ENCODE measurements at regions of chr21 and their contacts with region 1.

Region 1: DNA sequence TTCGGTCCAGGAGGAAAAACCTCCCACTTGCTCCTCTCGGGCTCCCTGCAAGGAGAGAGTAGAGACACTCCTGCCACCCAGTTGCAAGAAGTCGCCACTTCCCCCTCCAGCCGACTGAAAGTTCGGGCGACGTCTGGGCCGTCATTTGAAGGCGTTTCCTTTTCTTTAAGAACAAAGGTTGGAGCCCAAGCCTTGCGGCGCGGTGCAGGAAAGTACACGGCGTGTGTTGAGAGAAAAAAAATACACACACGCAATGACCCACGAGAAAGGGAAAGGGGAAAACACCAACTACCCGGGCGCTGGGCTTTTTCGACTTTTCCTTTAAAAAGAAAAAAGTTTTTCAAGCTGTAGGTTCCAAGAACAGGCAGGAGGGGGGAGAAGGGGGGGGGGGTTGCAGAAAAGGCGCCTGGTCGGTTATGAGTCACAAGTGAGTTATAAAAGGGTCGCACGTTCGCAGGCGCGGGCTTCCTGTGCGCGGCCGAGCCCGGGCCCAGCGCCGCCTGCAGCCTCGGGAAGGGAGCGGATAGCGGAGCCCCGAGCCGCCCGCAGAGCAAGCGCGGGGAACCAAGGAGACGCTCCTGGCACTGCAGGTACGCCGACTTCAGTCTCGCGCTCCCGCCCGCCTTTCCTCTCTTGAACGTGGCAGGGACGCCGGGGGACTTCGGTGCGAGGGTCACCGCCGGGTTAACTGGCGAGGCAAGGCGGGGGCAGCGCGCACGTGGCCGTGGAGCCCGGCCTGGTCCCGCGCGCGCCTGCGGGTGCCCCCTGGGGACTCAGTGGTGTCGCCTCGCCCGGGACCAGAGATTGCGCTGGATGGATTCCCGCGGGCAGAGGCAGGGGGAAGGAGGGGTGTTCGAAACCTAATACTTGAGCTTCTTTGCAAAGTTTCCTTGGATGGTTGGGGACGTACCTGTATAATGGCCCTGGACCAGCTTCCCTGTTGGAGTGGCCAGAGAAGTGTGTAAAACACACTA is 45.3 kb downstream of the MRPL39 start:
- DNase-seq: peak; percentile 12 to 93 (median 43)
- ATAC-seq: peak; percentile 74
- H3K4me3 ChIP-seq: peak overlapping the region; percentile 34
- H3K4me3 Mint-ChIP-seq: peak overlapping the region; percentile 88 to 98 (median 94)
- H3K27ac ChIP-seq: peak overlapping the region; percentile 61
- H3K27ac Mint-ChIP-seq: peak overlapping the region; percentile 69 to 96 (median 92)
- H3K4me1 ChIP-seq: peaks cover 11 to 29% of the 10 kb centered on the region in 2 donors
- H3K4me1 Mint-ChIP-seq: peaks cover 27 to 68% (median 50%) of the 10 kb centered on the region in 7 donors
- H3K27me3 ChIP-seq: no peaks in the 10 kb centered on the region
- H3K27me3 Mint-ChIP-seq: no peaks in the 10 kb centered on the region

Region 2: GRCh38 chr21:25385911-25386474 is 176.0 kb before region 1 on chr21:
- CTCF ChIA-PET with region 1: no interaction called
- POLR2A ChIA-PET with region 1: no interaction called
- intact Hi-C with region 1: loop called in 1 of 2 experiments (anchors 5 kb)
- DNase-seq: peak in 5 of 9 donors; percentile 14 to 35 (median 25)
- ATAC-seq: peak; percentile 57
- H3K4me3 ChIP-seq: no peak overlapping the region
- H3K4me3 Mint-ChIP-seq: no peak overlapping the region
- H3K27ac ChIP-seq: no peak overlapping the region
- H3K27ac Mint-ChIP-seq: peak overlapping the region in 1 of 9 donors; percentile 53
- H3K4me1 ChIP-seq: no peaks in the 10 kb centered on the region
- H3K4me1 Mint-ChIP-seq: peaks cover 0 to 9% (median 6%) of the 10 kb centered on the region in 7 donors
- H3K27me3 ChIP-seq: no peaks in the 10 kb centered on the region
- H3K27me3 Mint-ChIP-seq: peaks cover 0 to 13% (median 11%) of the 10 kb centered on the region in 5 donors

Region 3: DNA sequence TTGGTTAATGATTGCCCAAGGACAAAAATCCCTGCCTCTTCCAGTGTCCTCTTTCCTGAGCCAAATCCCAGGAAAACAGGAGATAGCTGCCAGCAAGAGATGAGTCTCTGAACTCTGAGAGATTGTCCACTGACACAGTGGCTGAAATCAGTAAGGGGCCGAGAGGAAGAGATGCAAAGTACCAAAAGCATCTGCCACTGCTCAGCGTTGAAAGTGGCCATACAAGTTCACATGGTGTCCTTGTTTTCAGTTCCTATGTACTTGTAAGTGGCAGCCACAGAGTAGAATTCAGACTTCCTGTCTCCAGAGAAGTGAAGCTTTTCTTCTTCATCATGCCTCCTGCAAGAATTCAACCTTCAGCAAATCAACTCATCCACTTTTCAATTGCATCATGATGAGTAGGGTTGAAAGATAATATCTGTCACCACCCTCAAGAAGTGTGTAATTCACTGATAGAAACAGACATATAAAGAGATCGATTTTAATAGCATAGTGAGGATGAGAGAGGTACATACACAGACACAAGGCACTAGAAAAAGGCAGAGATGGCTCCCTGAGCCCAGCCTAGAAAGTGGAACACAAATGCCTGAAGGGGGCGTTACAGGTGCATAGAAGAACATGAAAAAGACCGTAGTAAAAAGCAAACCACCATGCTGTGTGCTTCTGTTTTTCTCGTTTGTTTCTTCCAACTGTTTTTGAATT is 140.5 kb before region 1 on chr21:
- CTCF ChIA-PET with region 1: no interaction called
- POLR2A ChIA-PET with region 1: no interaction called
- intact Hi-C with region 1: loop called (anchors 1 kb)
- DNase-seq: peak in 8 of 9 donors; percentile 18 to 50 (median 40)
- ATAC-seq: peak; percentile 91
- H3K4me3 ChIP-seq: no peak overlapping the region
- H3K4me3 Mint-ChIP-seq: peak overlapping the region in 6 of 10 donors; percentile 7 to 88 (median 56)
- H3K27ac ChIP-seq: no peak overlapping the region
- H3K27ac Mint-ChIP-seq: peak overlapping the region in 7 of 9 donors; percentile 1 to 84 (median 41)
- H3K4me1 ChIP-seq: peaks cover 6 to 7% of the 10 kb centered on the region in 2 donors
- H3K4me1 Mint-ChIP-seq: peaks cover 4 to 25% (median 12%) of the 10 kb centered on the region in 7 donors
- H3K27me3 ChIP-seq: no peaks in the 10 kb centered on the region
- H3K27me3 Mint-ChIP-seq: peaks cover 0 to 6% (median 0%) of the 10 kb centered on the region in 5 donors

Region 4: DNA sequence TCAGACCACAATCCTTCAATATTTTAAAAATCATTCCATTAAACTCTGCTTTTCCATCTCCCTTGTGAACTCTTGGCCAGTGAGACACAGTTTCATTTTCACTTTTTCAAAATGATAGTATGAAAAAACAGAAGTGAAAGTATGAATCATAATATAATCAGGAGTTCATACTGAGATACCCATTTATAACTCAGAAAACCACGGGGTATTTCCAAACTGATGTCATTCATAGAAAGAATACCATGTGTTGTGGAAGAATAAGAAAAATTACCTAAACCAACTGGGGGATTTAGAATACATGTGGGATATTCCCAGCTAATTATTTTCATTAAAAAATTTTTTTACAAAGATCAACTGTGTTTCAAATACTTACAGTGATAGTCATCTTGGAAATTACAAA is 104.5 kb before region 1 on chr21:
- CTCF ChIA-PET with region 1: no interaction called
- POLR2A ChIA-PET with region 1: no interaction called
- intact Hi-C with region 1: loop called (anchors 1 to 5 kb)
- DNase-seq: peak in 6 of 9 donors; percentile 11 to 49 (median 34)
- ATAC-seq: peak; percentile 95
- H3K4me3 ChIP-seq: peak overlapping the region; percentile 1
- H3K4me3 Mint-ChIP-seq: peak overlapping the region; percentile 65 to 91 (median 82)
- H3K27ac ChIP-seq: peak overlapping the region; percentile 40
- H3K27ac Mint-ChIP-seq: peak overlapping the region; percentile 81 to 91 (median 86)
- H3K4me1 ChIP-seq: peaks cover 0 to 5% of the 10 kb centered on the region in 2 donors
- H3K4me1 Mint-ChIP-seq: peaks cover 5 to 39% (median 24%) of the 10 kb centered on the region in 7 donors
- H3K27me3 ChIP-seq: no peaks in the 10 kb centered on the region
- H3K27me3 Mint-ChIP-seq: no peaks in the 10 kb centered on the region

Region 5: DNA sequence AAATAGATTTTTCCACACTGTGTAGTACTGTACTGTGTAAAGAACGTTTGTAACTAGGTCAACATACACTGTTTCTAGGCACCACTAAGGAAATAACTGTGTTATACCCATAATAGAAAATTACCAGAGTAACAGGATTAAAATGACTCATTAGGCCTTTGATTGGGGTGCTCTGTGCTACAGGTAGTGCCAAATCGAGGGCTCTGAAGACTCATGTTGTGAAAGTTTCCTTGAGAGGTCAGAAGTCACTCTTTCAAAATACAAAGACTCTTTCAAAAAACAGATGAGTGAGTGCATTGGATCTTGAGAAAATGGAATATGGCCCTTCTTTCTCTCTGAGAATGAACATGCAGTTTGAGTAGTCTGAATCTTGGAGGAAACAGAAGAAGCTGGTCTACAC is 97.7 kb before region 1 on chr21:
- CTCF ChIA-PET with region 1: no interaction called
- POLR2A ChIA-PET with region 1: no interaction called
- intact Hi-C with region 1: loop called in 1 of 2 experiments (anchors 5 kb)
- DNase-seq: no peak
- ATAC-seq: peak; percentile 75
- H3K4me3 ChIP-seq: no peak overlapping the region
- H3K4me3 Mint-ChIP-seq: peak overlapping the region in 1 of 10 donors; percentile 8
- H3K27ac ChIP-seq: no peak overlapping the region
- H3K27ac Mint-ChIP-seq: peak overlapping the region in 2 of 9 donors; percentile 13 to 83
- H3K4me1 ChIP-seq: no peaks in the 10 kb centered on the region
- H3K4me1 Mint-ChIP-seq: peaks cover 0 to 47% (median 8%) of the 10 kb centered on the region in 7 donors
- H3K27me3 ChIP-seq: no peaks in the 10 kb centered on the region
- H3K27me3 Mint-ChIP-seq: no peaks in the 10 kb centered on the region

Region 6: GRCh38 chr21:25507522-25507921 is 54.4 kb before region 1 on chr21:
- CTCF ChIA-PET with region 1: interaction called, 3 read pairs
- POLR2A ChIA-PET with region 1: no interaction called
- intact Hi-C with region 1: loop called in 1 of 2 experiments (anchors 5 kb)
- DNase-seq: no peak
- ATAC-seq: no peak
- H3K4me3 ChIP-seq: no peak overlapping the region
- H3K4me3 Mint-ChIP-seq: no peak overlapping the region
- H3K27ac ChIP-seq: no peak overlapping the region
- H3K27ac Mint-ChIP-seq: no peak overlapping the region
- H3K4me1 ChIP-seq: no peaks in the 10 kb centered on the region
- H3K4me1 Mint-ChIP-seq: peaks cover 0 to 31% (median 0%) of the 10 kb centered on the region in 7 donors
- H3K27me3 ChIP-seq: no peaks in the 10 kb centered on the region
- H3K27me3 Mint-ChIP-seq: no peaks in the 10 kb centered on the region

Region 7: DNA sequence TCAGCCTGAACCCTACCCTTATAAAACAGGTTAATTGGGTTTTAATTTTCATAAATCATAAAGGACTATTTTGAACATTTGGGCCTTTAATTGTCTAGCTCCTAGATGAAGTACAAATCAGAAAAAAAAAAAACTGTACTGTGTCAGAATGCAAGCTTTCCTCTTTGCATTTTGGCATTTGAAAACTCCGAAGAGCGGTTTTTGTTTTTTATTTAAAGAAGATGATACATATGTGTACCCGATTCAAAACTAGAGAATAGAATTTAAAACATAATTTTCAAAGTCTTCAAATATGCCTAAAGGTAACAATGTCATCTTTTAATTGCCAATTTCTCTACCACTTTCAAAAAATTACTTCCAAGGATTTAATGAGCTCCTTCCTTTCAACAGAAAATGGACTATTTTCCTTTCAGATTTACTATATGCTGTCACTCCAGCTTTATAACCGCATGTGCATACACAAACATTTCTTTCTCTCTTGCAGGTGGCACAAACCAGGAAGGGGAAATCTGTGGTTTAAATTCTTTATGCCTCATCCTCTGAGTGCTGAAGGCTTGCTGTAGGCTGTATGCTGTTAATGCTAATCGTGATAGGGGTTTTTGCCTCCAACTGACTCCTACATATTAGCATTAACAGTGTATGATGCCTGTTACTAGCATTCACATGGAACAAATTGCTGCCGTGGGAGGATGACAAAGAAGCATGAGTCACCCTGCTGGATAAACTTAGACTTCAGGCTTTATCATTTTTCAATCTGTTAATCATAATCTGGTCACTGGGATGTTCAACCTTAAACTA is 11.7 kb after region 1 on chr21:
- CTCF ChIA-PET with region 1: interaction called, 4 read pairs
- POLR2A ChIA-PET with region 1: interaction called, 6 read pairs
- intact Hi-C with region 1: loop called (anchors 1 kb)
- DNase-seq: peak in 8 of 9 donors; percentile 42 to 63 (median 52)
- ATAC-seq: peak; percentile 81
- H3K4me3 ChIP-seq: peak overlapping the region; percentile 33
- H3K4me3 Mint-ChIP-seq: peak overlapping the region; percentile 72 to 92 (median 80)
- H3K27ac ChIP-seq: peak overlapping the region; percentile 42
- H3K27ac Mint-ChIP-seq: peak overlapping the region; percentile 80 to 94 (median 90)
- H3K4me1 ChIP-seq: peaks cover 4 to 15% of the 10 kb centered on the region in 2 donors
- H3K4me1 Mint-ChIP-seq: peaks cover 12 to 72% (median 37%) of the 10 kb centered on the region in 7 donors
- H3K27me3 ChIP-seq: no peaks in the 10 kb centered on the region
- H3K27me3 Mint-ChIP-seq: no peaks in the 10 kb centered on the region